Breast epithelium (tissue), 4 donors: ENCODE measurements at regions of chrX and their contacts with region 1.

Region 1: GRCh38 chrX:148825686-148826085 is 325.3 kb downstream of the AFF2 start:
- DNase-seq: no peak
- H3K4me3 ChIP-seq: no peak overlapping the region
- H3K27ac ChIP-seq: no peak overlapping the region
- H3K4me1 ChIP-seq: no peaks in the 10 kb centered on the region
- H3K27me3 ChIP-seq: peaks cover 0 to 11% of the 10 kb centered on the region in 2 donors
- CTCF ChIP-seq: no peak
- POLR2A ChIP-seq: no peak

Region 2: GRCh38 chrX:148670277-148670676 is 155.4 kb before region 1 on chrX:
- intact Hi-C with region 1: no loop called
- DNase-seq: no peak
- H3K4me3 ChIP-seq: no peak overlapping the region
- H3K27ac ChIP-seq: no peak overlapping the region
- H3K4me1 ChIP-seq: no peaks in the 10 kb centered on the region
- H3K27me3 ChIP-seq: no peaks in the 10 kb centered on the region
- CTCF ChIP-seq: no peak
- POLR2A ChIP-seq: no peak

Region 3: DNA sequence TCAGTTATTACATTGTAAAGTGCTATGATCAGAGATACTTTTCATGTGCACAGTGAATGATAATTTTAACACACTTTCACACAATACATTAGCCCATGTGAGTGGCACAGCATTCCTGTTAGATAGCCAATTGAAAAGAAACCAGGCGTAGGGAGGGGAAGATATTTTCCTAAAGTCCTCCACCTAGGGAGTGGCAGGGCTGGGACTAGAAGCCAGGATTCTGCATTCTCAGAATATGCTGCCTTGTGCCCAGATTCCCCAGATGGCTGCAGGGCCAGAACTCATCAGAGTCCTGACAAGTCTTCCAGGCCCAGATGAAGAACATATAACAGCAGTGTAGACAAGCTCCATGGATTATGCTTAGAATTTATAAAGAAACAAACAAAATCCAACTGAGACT is 24.9 kb after region 1 on chrX:
- intact Hi-C with region 1: loop called (anchors 1 kb)
- DNase-seq: no peak
- H3K4me3 ChIP-seq: no peak overlapping the region
- H3K27ac ChIP-seq: no peak overlapping the region
- H3K4me1 ChIP-seq: no peaks in the 10 kb centered on the region
- H3K27me3 ChIP-seq: no peaks in the 10 kb centered on the region
- CTCF ChIP-seq: no peak
- POLR2A ChIP-seq: no peak